HCT116 (cell line): ENCODE measurements at regions of chr7 and their contacts with region 1.

Region 1: DNA sequence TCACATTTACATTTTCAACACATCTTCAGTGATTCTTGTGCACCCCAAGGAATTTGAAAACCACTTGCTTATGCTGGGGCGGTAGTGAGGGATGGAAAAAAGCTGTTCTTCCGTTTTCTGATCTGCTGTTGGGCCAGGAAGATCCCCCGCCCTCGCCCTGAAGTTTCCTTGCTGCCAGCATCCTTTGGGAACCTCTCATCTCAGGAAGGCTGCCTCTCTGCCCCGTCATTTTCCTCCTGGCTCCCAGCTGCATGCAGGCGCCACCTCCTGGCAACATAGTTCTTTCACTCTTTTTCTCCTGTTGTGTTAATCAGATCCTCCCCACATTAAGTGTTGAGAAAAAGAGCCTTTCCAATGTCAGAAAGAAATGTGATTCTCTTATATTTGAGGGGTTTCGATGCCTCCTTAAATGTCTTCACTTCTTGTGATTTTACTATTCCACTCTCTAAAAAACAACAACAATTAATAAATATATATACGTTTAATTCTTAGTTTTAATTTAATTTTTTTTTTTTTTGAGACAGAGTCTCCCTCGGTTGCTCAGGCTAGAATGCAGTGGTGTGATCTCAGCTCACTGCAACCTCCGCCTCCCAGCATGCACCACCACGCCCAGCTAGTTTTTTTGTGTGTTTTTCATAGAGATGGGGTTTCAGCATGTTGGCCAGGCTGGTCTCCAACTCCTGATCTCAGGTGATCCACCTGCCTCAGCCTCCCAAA is 122.9 kb downstream of the RALA start:
- DNase-seq: peak; percentile 47
- ATAC-seq: peak; percentile 78
- H3K4me3 ChIP-seq: no peak overlapping the region
- H3K27ac ChIP-seq: no peak overlapping the region
- H3K4me1 ChIP-seq: peaks cover 7 to 26% of the 10 kb centered on the region in 2 experiments; a peak in 3 of 4 replicates
- H3K27me3 ChIP-seq: no peaks in the 10 kb centered on the region
- CTCF ChIP-seq: peak; percentile 82 to 86 (median 83)
- POLR2A ChIP-seq: no peak
- RAD21 ChIP-seq: peak; percentile 90

Region 2: GRCh38 chr7:39580149-39580874 is 165.9 kb before region 1 on chr7:
- CTCF ChIA-PET with region 1: interaction called, 112 read pairs
- POLR2A ChIA-PET with region 1: interaction called, 8 read pairs
- RAD21 ChIA-PET with region 1: interaction called, 7 to 15 read pairs
- intact Hi-C with region 1: loop called (anchors 1 kb)
- DNase-seq: peak; percentile 87
- ATAC-seq: peak; percentile 93
- H3K4me3 ChIP-seq: no peak overlapping the region
- H3K27ac ChIP-seq: no peak overlapping the region
- H3K4me1 ChIP-seq: peaks cover 0 to 5% of the 10 kb centered on the region in 2 experiments; a peak in 1 of 4 replicates
- H3K27me3 ChIP-seq: no peaks in the 10 kb centered on the region
- CTCF ChIP-seq: peak; percentile 73 to 90 (median 85)
- POLR2A ChIP-seq: no peak
- RAD21 ChIP-seq: peak; percentile 96

Region 3: GRCh38 chr7:39623018-39623731 is 123.1 kb before region 1 on chr7 and contains the start of gene RALA:
- CTCF ChIA-PET with region 1: no interaction called
- POLR2A ChIA-PET with region 1: no interaction called
- RAD21 ChIA-PET with region 1: no interaction called
- intact Hi-C with region 1: loop called (anchors 5 kb)
- DNase-seq: peak; percentile 82
- ATAC-seq: peak; percentile 95
- H3K4me3 ChIP-seq: peak within 1 kb of the TSS; percentile 57 to 84
- H3K27ac ChIP-seq: peak within 1 kb of the TSS; percentile 78
- H3K4me1 ChIP-seq: peaks cover 11 to 19% of the 10 kb centered on the region in 2 experiments
- H3K27me3 ChIP-seq: no peaks in the 10 kb centered on the region
- CTCF ChIP-seq: no peak
- POLR2A ChIP-seq: peak; percentile 75
- RAD21 ChIP-seq: no peak
- total RNA-seq, gene RALA: 27.3 TPM